ENCODE measurements at regions of chr5 and their contacts with region 1.

Region 1: GRCh38 chr5:177390363-177391300 is 6.4 kb downstream of the SLC34A1 start:
- DNase-seq: peak; percentile 76 to 94 (median 88)
- ATAC-seq: peak; percentile 78
- H3K4me3 ChIP-seq: no peak overlapping the region
- H3K4me3 Mint-ChIP-seq: peak overlapping the region; percentile 55
- H3K27ac ChIP-seq: peak overlapping the region in 1 of 2 experiments; percentile 85
- H3K27ac Mint-ChIP-seq: peak overlapping the region; percentile 90
- H3K4me1 ChIP-seq: peaks cover 43% of the 10 kb centered on the region
- H3K4me1 Mint-ChIP-seq: peaks cover 35% of the 10 kb centered on the region
- H3K27me3 ChIP-seq: no peaks in the 10 kb centered on the region
- H3K27me3 Mint-ChIP-seq: no peaks in the 10 kb centered on the region
- CTCF ChIP-seq: peak; percentile 87

Region 2: DNA sequence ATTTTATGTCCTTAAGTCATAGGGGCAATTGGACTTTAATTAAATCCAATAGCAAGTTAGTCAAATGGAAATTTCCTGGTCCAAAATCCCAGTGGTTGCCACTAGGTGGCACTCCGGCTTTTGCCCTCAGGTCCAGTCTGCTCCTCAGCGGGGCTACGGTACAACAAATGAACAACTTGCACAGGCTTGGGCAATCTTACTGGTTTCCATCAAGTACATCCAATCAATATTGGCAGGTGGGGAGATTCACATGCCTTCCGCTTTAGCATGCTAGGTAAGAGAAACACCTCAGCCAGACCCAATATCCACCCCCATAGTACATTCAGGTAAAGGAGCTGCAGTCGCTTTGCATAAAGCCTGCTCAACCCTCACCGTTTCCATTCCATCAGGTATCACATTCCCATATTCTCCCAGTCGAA is 72.7 kb before region 1 on chr5:
- CTCF ChIA-PET with region 1: interaction called, 75 read pairs
- POLR2A ChIA-PET with region 1: no interaction called
- intact Hi-C with region 1: loop called in 1 of 2 experiments (anchors 2 kb)
- DNase-seq: peak; percentile 52 to 85 (median 75)
- ATAC-seq: peak; percentile 81
- H3K4me3 ChIP-seq: no peak overlapping the region
- H3K4me3 Mint-ChIP-seq: no peak overlapping the region
- H3K27ac ChIP-seq: no peak overlapping the region
- H3K27ac Mint-ChIP-seq: no peak overlapping the region
- H3K4me1 ChIP-seq: peaks cover 10% of the 10 kb centered on the region
- H3K4me1 Mint-ChIP-seq: peaks cover 14% of the 10 kb centered on the region
- H3K27me3 ChIP-seq: no peaks in the 10 kb centered on the region
- H3K27me3 Mint-ChIP-seq: no peaks in the 10 kb centered on the region
- CTCF ChIP-seq: peak; percentile 90

Region 3: GRCh38 chr5:177370488-177371119 is 20.0 kb before region 1 on chr5:
- CTCF ChIA-PET with region 1: interaction called, 77 read pairs
- POLR2A ChIA-PET with region 1: interaction called, 22 read pairs
- intact Hi-C with region 1: loop called in 1 of 2 experiments (anchors 1 kb)
- DNase-seq: peak in 8 of 9 experiments; percentile 18 to 81 (median 58)
- ATAC-seq: peak; percentile 63
- H3K4me3 ChIP-seq: no peak overlapping the region
- H3K4me3 Mint-ChIP-seq: no peak overlapping the region
- H3K27ac ChIP-seq: peak overlapping the region in 1 of 2 experiments; percentile 48
- H3K27ac Mint-ChIP-seq: peak overlapping the region; percentile 32
- H3K4me1 ChIP-seq: peaks cover 73% of the 10 kb centered on the region
- H3K4me1 Mint-ChIP-seq: peaks cover 69% of the 10 kb centered on the region
- H3K27me3 ChIP-seq: no peaks in the 10 kb centered on the region
- H3K27me3 Mint-ChIP-seq: no peaks in the 10 kb centered on the region
- CTCF ChIP-seq: no peak

Region 4: GRCh38 chr5:177425801-177426565 is 35.4 kb after region 1 on chr5:
- CTCF ChIA-PET with region 1: interaction called, 20 read pairs
- POLR2A ChIA-PET with region 1: interaction called, 13 read pairs
- intact Hi-C with region 1: loop called in 1 of 2 experiments (anchors 1 kb)
- DNase-seq: peak; percentile 99 to 100 (median 99)
- ATAC-seq: peak; percentile 80
- H3K4me3 ChIP-seq: peak overlapping the region; percentile 63 to 65
- H3K4me3 Mint-ChIP-seq: peak overlapping the region; percentile 91
- H3K27ac ChIP-seq: peak overlapping the region; percentile 86 to 92
- H3K27ac Mint-ChIP-seq: peak overlapping the region; percentile 98
- H3K4me1 ChIP-seq: peaks cover 46% of the 10 kb centered on the region
- H3K4me1 Mint-ChIP-seq: peaks cover 53% of the 10 kb centered on the region
- H3K27me3 ChIP-seq: no peaks in the 10 kb centered on the region
- H3K27me3 Mint-ChIP-seq: no peaks in the 10 kb centered on the region
- CTCF ChIP-seq: no peak

Region 5: GRCh38 chr5:177454397-177455035 is 63.9 kb after region 1 on chr5:
- CTCF ChIA-PET with region 1: interaction called, 341 read pairs
- POLR2A ChIA-PET with region 1: interaction called, 44 read pairs
- intact Hi-C with region 1: loop called (anchors 1 kb)
- DNase-seq: peak; percentile 90 to 98 (median 94)
- ATAC-seq: peak; percentile 55
- H3K4me3 ChIP-seq: peak overlapping the region; percentile 64 to 93
- H3K4me3 Mint-ChIP-seq: peak overlapping the region; percentile 86
- H3K27ac ChIP-seq: peak overlapping the region; percentile 88 to 96
- H3K27ac Mint-ChIP-seq: peak overlapping the region; percentile 85
- H3K4me1 ChIP-seq: peaks cover 16% of the 10 kb centered on the region
- H3K4me1 Mint-ChIP-seq: peaks cover 18% of the 10 kb centered on the region
- H3K27me3 ChIP-seq: no peaks in the 10 kb centered on the region
- H3K27me3 Mint-ChIP-seq: no peaks in the 10 kb centered on the region
- CTCF ChIP-seq: peak; percentile 84

Region 6: GRCh38 chr5:178069909-178070308 is 679.3 kb after region 1 on chr5:
- CTCF ChIA-PET with region 1: no interaction called
- POLR2A ChIA-PET with region 1: no interaction called
- intact Hi-C with region 1: loop called in 1 of 2 experiments (anchors 10 kb)
- DNase-seq: peak in 7 of 9 experiments; percentile 15 to 62 (median 43)
- ATAC-seq: peak; percentile 57
- H3K4me3 ChIP-seq: no peak overlapping the region
- H3K4me3 Mint-ChIP-seq: no peak overlapping the region
- H3K27ac ChIP-seq: no peak overlapping the region
- H3K27ac Mint-ChIP-seq: no peak overlapping the region
- H3K4me1 ChIP-seq: peaks cover 17% of the 10 kb centered on the region
- H3K4me1 Mint-ChIP-seq: peaks cover 28% of the 10 kb centered on the region
- H3K27me3 ChIP-seq: peaks cover 0 to 3% of the 10 kb centered on the region in 2 experiments
- H3K27me3 Mint-ChIP-seq: no peaks in the 10 kb centered on the region
- CTCF ChIP-seq: peak; percentile 19

Region 7: DNA sequence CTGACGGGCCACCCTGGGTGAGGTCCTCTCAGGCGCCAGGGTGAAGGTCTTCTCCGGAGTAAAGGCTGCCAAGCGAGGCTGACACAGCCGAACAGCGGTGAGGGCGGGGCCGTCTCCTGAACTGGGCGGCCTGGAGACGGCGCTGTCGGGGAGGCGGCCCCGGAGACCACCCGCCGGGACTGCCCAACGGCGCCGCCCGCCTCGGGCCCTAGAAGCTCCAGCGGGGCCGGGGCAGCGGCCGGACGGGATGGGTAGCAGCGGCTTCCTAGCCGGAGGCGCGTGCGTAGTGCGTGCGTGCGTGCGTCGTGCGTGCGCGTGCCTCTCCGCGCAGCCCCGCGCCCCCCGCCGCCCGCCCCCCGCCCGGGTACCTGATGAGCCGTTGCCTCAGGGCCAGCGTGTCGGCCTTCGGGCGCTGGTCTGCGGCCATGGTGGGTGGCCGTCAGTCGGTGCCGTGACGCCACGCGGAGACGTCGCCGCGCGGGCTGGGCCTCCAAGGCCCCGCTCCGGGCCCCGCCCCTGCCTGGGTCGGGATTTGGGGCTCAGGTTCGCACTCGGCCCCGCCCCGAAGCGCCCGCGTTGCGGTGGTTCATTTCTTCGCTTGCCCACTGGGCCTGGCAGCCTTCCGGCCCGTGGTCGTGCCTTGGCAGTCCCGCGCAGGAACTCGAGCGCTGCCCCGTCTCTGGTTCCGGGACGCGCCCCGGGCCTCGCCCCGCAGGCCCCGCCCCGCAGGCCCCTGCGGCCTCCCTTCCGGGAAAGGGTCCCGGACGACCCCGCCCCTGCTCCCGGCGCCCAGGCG is 841.7 kb after region 1 on chr5 and contains the start of gene PHYKPL:
- CTCF ChIA-PET with region 1: no interaction called
- POLR2A ChIA-PET with region 1: no interaction called
- intact Hi-C with region 1: no loop called
- DNase-seq: peak; percentile 33 to 83 (median 65)
- ATAC-seq: peak; percentile 65
- H3K4me3 ChIP-seq: peak within 1 kb of the TSS; percentile 87 to 89
- H3K4me3 Mint-ChIP-seq: peak within 1 kb of the TSS; percentile 81
- H3K27ac ChIP-seq: peak within 1 kb of the TSS; percentile 76 to 78
- H3K27ac Mint-ChIP-seq: peak within 1 kb of the TSS; percentile 87
- H3K4me1 ChIP-seq: peaks cover 61% of the 10 kb centered on the region
- H3K4me1 Mint-ChIP-seq: peaks cover 76% of the 10 kb centered on the region
- H3K27me3 ChIP-seq: no peaks in the 10 kb centered on the region
- H3K27me3 Mint-ChIP-seq: no peaks in the 10 kb centered on the region
- CTCF ChIP-seq: no peak
- total RNA-seq, gene PHYKPL: 82.8 to 90.3 TPM

Measured in CD8-positive, alpha-beta T cell (primary cell).